Activated CD8-positive, alpha-beta memory T cell treated with anti-CD3 and anti-CD28 coated beads, Interleukin-2, amount 10 ng/mL, durations not matched to agents 7 days and 5 days (primary cell): ENCODE measurements at regions of chr16 and their contacts with region 1.

Region 1: GRCh38 chr16:50281964-50282538 is 15.7 kb downstream of the ADCY7 start:
- DNase-seq: peak; percentile 90
- ATAC-seq: peak; percentile 82
- H3K4me3 Mint-ChIP-seq: peak overlapping the region; percentile 54
- H3K27ac Mint-ChIP-seq: peak overlapping the region; percentile 66
- H3K4me1 Mint-ChIP-seq: peaks cover 83% of the 10 kb centered on the region
- H3K27me3 Mint-ChIP-seq: no peaks in the 10 kb centered on the region

Region 2: DNA sequence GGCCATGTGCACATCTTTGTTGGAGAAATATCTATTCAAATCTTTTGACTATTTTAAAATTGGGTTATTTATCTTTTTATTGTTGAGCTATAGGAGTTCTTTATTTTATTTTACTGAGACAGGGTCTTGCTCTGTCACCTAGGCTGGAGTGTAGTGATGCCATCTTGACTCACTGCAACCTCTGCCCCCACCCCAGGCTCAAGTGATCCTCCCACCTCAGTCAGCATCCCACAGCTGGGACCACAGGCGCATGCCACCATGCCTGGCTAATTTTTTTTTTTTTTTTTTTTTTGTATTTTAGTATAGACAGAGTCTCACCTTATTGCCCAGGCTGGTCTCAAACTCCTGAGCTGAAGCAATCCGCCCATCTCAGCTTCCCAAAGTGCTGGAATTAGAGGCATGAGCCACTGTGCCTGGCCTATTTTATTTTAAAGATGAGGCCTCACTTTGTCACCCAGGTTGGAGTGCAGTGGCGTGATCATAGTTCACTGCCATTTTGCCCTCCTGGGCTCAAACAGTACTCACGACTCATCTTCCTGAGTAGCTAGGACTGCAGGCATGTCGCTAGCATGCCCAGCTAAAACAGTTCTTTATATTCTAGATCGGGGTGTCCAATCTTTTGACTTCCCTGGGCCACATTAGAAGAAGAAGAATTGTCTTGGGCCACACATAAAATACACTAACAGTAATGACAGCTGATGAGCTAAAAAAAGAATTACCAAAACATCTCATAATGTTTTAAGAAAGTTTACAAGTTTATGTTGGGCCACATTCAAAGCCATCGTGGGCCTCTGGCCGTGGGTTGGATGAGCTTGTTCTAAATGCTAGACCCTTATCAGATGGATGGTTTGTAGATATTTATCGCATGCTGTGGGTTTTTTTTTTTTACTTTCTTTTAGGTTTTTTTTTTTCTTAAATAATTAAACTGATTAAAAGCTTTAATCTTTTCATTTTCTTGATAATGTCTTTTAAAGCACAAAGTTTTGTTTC is 115.2 kb before region 1 on chr16:
- CTCF ChIA-PET with region 1: no interaction called
- DNase-seq: no peak
- ATAC-seq: peak; percentile 63
- H3K4me3 Mint-ChIP-seq: peak overlapping the region; percentile 21
- H3K27ac Mint-ChIP-seq: peak overlapping the region; percentile 52
- H3K4me1 Mint-ChIP-seq: peaks cover 36% of the 10 kb centered on the region
- H3K27me3 Mint-ChIP-seq: no peaks in the 10 kb centered on the region

Region 3: DNA sequence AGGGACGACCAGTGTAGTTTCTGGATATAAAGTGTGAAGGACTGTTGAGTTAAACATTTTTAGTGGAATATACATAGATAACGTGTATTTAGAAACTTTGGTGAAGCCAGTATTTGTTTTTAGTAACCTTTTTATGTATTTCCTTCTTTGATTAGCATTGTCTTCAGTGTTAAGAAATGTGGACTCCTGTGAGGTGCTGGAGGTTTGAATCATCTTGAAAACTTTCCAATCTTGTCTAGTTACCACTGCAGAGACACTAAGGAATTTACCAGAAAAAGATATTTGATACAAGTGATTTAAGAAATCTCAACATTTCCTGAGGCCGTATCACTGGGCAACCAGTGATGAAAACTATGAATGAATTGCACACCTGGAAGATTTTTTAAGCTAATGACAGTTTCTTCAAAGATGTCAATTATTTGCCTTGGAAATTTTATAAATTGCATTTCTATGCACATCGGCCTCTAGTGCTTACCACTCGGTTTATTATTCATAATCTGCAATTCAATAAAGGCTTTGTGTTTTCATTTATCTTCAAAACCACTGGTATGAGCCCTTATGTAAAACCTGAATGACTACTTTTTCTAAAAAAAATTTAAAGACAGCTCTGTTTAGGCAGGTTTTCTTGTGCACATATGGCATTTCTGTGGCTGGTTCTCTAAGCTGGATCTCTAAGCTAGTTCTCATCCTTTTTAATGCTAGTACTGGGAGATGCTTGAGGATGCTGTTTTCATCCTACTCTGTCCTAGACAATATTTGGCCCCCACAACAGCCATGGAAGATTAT is 47.1 kb before region 1 on chr16:
- CTCF ChIA-PET with region 1: no interaction called
- DNase-seq: no peak
- ATAC-seq: no peak
- H3K4me3 Mint-ChIP-seq: no peak overlapping the region
- H3K27ac Mint-ChIP-seq: no peak overlapping the region
- H3K4me1 Mint-ChIP-seq: peaks cover 9% of the 10 kb centered on the region
- H3K27me3 Mint-ChIP-seq: no peaks in the 10 kb centered on the region

Region 4: DNA sequence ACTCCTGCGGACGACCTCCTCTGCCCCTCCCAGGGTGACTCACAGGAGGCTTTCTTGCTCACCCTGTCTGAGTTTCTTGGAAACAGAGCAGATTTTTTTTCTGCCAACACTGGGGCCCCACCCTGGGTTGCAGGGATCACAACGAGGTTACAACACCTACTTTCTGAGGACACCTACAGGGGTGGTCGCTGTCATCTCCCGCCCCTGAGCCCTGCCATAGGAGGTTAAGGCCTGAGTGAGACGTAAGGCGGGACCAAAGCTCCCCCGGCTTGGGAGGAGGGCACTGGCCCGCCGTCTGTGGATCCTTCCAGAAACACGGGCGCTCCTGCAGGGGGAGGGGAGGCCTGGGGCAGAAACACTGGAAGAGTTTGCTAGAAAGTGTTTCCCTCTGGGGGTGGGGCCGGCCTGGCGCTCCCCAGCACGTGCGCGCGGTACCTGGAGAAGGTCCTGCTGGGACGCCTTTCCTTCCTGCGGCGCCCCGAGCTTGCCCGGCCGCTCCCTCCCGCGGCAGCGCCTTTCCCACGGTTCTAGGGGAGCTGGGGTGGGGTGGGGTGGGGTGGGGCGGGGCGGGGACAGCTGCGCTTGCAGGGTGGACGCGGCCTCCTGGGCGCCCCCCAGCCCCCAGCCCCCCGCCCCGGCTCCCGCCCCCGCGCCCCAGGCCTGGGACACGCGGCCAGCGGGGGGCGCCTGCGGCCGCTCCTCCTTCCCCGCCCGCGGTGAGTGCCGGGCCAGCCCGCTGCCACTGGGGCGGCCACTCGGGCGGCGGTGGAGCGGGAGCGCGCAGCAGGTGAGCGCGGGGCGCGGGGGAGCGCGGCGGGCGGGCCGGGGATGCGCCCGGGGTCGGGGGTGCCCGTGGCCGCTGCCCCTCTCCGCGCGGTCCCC is 36.4 kb before region 1 on chr16:
- CTCF ChIA-PET with region 1: interaction called, 11 read pairs
- DNase-seq: peak; percentile 87
- ATAC-seq: peak; percentile 76
- H3K4me3 Mint-ChIP-seq: peak overlapping the region; percentile 74
- H3K27ac Mint-ChIP-seq: peak overlapping the region; percentile 80
- H3K4me1 Mint-ChIP-seq: peaks cover 30% of the 10 kb centered on the region
- H3K27me3 Mint-ChIP-seq: peaks cover 12% of the 10 kb centered on the region